Endothelial cell of umbilical vein (primary cell): ENCODE measurements at regions of chr7 and their contacts with region 1.

Region 1: GRCh38 chr7:83976295-83976694 is 218.3 kb downstream of the SEMA3A start:
- DNase-seq: peak; percentile 55
- H3K4me3 ChIP-seq: no peak overlapping the region
- H3K27ac ChIP-seq: no peak overlapping the region
- H3K4me1 ChIP-seq: no peaks in the 10 kb centered on the region
- H3K27me3 ChIP-seq: no peaks in the 10 kb centered on the region
- CTCF ChIP-seq: peak; percentile 23 to 30
- POLR2A ChIP-seq: no peak

Region 2: GRCh38 chr7:84113286-84113685 is 137.0 kb after region 1 on chr7:
- CTCF ChIA-PET with region 1: no interaction called
- POLR2A ChIA-PET with region 1: no interaction called
- dilution Hi-C with region 1: no loop called
- intact Hi-C with region 1: loop called (anchors 5 kb)
- DNase-seq: peak; percentile 84
- H3K4me3 ChIP-seq: no peak overlapping the region
- H3K27ac ChIP-seq: peak overlapping the region; percentile 52
- H3K4me1 ChIP-seq: peaks cover 25% of the 10 kb centered on the region
- H3K27me3 ChIP-seq: no peaks in the 10 kb centered on the region
- CTCF ChIP-seq: no peak
- POLR2A ChIP-seq: no peak

Region 3: DNA sequence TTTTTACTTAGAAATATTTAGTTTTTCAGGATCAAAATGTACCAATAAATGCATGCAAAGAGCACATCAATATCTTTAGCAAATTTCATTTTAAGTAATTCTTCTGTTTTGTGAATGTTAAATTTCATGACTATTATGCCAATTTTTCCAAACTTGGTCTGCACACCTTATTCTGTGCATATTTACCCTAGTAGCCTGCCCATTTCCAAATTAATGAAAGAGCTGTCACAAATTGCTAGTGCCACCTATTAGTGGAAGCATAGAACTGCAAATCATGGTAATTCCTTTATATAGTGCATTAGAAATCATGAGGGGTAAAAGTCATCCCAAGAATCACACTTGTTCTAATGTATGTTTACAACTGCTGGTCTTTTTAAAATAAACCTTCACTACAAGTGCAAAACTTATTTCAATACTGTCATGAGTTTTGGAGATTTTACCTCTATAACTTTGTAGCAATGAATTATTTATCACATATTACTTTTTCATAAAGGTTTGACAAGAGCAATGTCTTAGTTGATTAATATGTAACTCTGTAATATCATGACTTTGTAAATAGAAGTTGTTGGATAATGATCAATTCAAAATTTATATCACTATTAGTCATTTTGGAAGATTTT is 212.6 kb after region 1 on chr7:
- CTCF ChIA-PET with region 1: interaction called, 25 read pairs
- POLR2A ChIA-PET with region 1: no interaction called
- dilution Hi-C with region 1: no loop called
- intact Hi-C with region 1: loop called (anchors 1 kb)
- DNase-seq: peak; percentile 66
- H3K4me3 ChIP-seq: no peak overlapping the region
- H3K27ac ChIP-seq: no peak overlapping the region
- H3K4me1 ChIP-seq: peaks cover 7% of the 10 kb centered on the region
- H3K27me3 ChIP-seq: no peaks in the 10 kb centered on the region
- CTCF ChIP-seq: peak; percentile 19 to 36
- POLR2A ChIP-seq: no peak

Region 4: DNA sequence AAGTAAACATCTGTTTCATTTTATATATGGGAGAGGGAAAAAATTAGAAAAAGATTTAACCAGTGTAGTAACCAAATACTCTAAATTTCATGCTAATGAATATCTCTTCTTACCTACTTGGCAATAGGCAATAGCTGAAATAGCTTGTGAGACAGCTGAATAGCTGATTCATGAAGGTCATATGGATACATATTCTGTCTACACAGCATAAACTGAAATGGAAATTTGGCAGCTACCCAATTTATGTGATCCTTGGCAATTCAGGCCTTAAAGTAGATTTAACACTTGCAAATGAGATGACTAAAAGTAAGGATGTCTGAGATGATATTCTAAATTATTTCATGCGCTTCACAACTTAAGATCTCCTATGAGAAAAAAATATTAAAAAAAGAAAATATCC is 479.5 kb after region 1 on chr7:
- CTCF ChIA-PET with region 1: interaction called, 9 read pairs
- POLR2A ChIA-PET with region 1: no interaction called
- dilution Hi-C with region 1: no loop called
- intact Hi-C with region 1: loop called (anchors 2 kb)
- DNase-seq: peak; percentile 55
- H3K4me3 ChIP-seq: no peak overlapping the region
- H3K27ac ChIP-seq: no peak overlapping the region
- H3K4me1 ChIP-seq: no peaks in the 10 kb centered on the region
- H3K27me3 ChIP-seq: no peaks in the 10 kb centered on the region
- CTCF ChIP-seq: no peak
- POLR2A ChIP-seq: no peak

Region 5: DNA sequence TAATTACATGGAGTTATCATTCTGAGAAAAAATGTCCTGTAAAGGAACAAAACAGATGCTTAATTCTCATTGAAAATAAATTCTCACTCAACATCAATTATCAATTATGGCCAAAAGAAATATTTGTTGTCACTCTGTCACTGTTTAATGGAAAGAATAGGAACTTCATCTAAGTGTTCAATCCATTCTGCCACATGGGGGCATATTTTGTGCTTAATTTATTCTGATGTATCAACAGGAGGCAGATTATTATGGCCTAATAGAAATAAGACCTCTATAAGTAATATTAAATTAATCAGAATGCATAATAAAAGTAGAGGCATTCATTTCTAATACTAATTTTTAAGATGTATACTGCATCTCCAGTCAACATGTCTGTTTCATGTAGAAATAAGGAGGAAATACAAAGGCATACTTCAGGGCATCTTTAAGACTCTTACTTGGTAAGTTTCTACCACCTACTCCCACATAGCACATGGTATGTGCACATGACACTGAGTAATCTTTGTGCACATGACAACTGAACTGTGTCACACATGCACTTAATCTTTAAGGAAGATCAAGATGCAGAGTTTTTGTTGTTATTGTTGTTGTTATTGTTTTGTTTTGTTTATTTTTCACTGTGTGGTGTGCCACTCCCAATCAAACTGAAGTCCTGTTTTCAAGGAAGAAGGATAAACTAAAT is 638.7 kb after region 1 on chr7:
- CTCF ChIA-PET with region 1: no interaction called
- POLR2A ChIA-PET with region 1: no interaction called
- dilution Hi-C with region 1: no loop called
- intact Hi-C with region 1: loop called (anchors 2 kb)
- DNase-seq: peak; percentile 44
- H3K4me3 ChIP-seq: no peak overlapping the region
- H3K27ac ChIP-seq: no peak overlapping the region
- H3K4me1 ChIP-seq: no peaks in the 10 kb centered on the region
- H3K27me3 ChIP-seq: no peaks in the 10 kb centered on the region
- CTCF ChIP-seq: no peak
- POLR2A ChIP-seq: no peak

Region 6: DNA sequence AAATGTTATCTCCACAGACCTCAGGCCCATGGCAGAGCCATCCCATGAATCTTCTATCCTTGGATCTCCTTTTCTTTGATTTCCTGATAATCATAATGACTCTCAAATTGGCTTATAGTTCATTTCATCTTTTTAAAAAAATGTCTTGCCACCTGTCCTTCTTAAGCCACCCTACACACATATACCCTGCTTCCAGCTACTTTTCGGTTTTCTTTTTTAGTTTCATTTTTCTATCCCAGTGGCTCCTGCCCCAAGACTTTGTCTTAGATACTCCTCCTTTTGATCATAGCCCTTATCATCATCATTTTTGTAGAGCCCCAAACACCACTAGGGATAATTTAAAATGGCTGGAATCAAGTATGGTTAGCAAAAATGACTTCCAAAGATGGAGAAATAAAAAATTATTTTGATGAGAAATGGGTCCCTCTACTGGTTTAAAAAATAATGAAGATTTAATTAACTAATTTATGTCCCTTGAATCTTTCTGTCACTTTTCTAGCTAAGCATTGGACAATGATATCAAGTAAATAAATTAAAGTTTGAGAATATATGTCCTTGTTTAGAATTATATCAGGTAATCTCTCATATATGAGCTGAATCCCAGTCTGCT is 1487.9 kb after region 1 on chr7:
- CTCF ChIA-PET with region 1: no interaction called
- POLR2A ChIA-PET with region 1: no interaction called
- dilution Hi-C with region 1: no loop called
- intact Hi-C with region 1: loop called (anchors 10 kb)
- DNase-seq: peak; percentile 13
- H3K4me3 ChIP-seq: no peak overlapping the region
- H3K27ac ChIP-seq: no peak overlapping the region
- H3K4me1 ChIP-seq: no peaks in the 10 kb centered on the region
- H3K27me3 ChIP-seq: no peaks in the 10 kb centered on the region
- CTCF ChIP-seq: no peak
- POLR2A ChIP-seq: no peak